ENCODE measurements at regions of chr17 and their contacts with region 1.

Region 1: GRCh38 chr17:48878918-48879898 is 13.4 kb upstream of the ATP5MC1 start:
- DNase-seq: peak; percentile 85 to 94
- ATAC-seq: peak; percentile 86 to 88
- H3K4me3 ChIP-seq: no peak overlapping the region
- H3K27ac ChIP-seq: no peak overlapping the region
- H3K4me1 ChIP-seq: peaks cover 15% of the 10 kb centered on the region
- CTCF ChIP-seq: peak; percentile 99
- EP300 ChIP-seq: no peak
- POLR2A ChIP-seq: no peak
- RAD21 ChIP-seq: peak; percentile 99 to 100

Region 2: DNA sequence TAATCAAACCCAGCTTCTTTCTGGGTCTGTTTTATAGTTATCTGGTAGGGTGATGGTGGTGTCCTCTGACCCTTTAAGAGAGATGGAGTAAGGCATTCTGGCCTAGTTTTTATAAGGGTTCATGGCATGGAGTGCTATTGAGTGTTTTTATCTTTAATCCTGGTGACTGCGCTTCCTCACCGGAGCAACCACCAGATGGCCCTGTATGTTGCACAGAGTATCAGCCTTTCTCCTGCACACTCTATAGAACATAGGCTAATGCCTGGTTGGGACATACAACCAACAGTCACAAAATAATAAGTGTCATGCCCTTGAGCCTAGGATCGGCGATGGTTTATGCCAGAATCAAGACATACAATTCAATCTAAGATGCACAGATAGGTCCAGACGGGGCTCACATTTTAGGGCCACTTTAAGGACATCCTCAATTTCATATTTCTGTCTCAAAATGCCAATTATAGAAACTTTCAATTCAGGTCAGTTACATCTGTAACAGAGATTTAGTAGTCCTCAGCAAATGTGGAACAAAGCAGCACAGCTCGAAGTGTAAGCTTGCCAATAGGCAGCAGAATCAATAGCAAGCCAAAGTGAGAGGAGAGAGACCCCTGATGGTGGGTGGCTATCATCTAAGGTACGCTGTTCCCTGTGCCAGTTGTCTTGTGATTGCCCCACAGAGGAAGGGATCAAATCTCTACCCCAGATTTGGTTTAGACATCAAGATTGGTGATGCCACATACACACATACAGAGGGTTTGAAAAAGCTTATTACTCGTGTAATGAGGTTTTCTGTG is 215.9 kb before region 1 on chr17:
- CTCF ChIA-PET with region 1: interaction called, 77 read pairs
- POLR2A ChIA-PET with region 1: no interaction called
- DNase-seq: no peak
- ATAC-seq: peak; percentile 73 to 83
- H3K4me3 ChIP-seq: no peak overlapping the region
- H3K27ac ChIP-seq: no peak overlapping the region
- H3K4me1 ChIP-seq: no peaks in the 10 kb centered on the region
- CTCF ChIP-seq: no peak
- EP300 ChIP-seq: no peak
- POLR2A ChIP-seq: no peak
- RAD21 ChIP-seq: 0 out of 5 replicates have a peak, but pooled peaks of 1 of the 2 experiments have one; percentile 11

Region 3: DNA sequence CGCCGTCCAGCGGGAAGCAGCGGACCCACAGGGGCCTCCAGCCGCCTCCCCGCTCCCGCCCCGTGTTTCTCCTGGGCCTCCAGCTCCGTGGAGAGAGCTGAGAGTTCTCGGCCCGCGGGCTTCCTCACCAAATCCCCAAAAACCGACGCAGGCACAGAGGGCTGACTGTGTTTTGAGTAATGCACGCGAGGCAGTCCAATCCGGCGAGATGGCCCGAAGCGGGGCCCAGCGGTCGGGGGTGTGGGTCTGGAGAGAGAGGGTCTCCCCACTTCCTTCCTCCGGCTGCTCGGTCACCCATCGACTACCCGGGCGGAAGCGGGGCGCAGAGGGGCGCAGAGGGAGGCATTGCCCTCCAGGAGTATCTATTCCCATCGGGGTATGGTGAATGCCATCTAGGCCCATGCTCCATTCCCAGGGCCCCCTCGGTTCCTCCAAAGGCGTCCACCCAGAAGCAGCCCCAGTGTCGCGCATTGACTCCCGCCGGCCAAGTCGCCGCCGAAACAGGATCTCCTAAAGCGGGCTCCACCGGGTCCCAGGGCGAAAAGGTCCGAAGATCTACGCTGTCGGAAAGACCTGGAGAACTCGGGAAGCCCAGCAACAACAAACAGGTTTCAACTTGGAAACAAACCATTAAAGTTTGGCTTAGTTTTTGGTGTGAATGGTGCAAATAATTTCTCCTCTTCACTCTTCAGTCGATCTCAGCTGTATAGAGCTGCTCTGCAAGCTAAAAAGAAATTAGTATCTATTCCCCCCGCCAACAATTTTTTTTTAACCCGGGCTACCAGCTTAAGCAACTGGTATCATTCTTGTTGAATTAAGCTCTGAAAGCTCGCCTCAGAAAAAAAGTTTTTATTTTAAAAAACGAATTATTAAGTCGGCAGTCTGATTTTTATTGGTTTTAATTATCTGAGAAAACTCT is 131.5 kb before region 1 on chr17:
- CTCF ChIA-PET with region 1: interaction called, 24 read pairs
- POLR2A ChIA-PET with region 1: no interaction called
- DNase-seq: no peak
- ATAC-seq: no peak
- H3K4me3 ChIP-seq: no peak overlapping the region
- H3K27ac ChIP-seq: no peak overlapping the region
- H3K4me1 ChIP-seq: peaks cover 17% of the 10 kb centered on the region; the same call in 2 of the 3 replicates
- CTCF ChIP-seq: no peak
- EP300 ChIP-seq: no peak
- POLR2A ChIP-seq: no peak
- RAD21 ChIP-seq: no peak

Region 4: DNA sequence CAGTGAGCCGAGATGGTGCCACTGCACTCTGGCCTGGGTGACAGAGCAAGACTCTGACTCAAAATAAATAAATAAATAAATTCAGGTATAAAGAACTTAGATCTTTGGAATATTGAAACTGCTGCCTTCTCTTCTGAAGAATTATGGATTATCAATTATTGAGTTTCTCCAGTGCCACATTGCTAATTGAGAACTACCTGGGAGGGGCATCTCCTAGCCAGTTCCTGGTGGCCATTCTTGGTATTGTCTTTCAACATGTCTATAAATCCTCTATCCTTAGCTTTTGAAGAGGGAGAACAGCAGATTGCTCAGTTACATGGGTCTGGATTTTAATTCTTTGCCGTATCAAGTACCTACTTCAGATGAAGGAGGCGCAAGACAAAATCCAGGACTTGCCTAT is 19.2 kb before region 1 on chr17:
- CTCF ChIA-PET with region 1: interaction called, 215 read pairs
- POLR2A ChIA-PET with region 1: no interaction called
- DNase-seq: peak in 1 of 2 experiments; percentile 41
- ATAC-seq: peak; percentile 47 to 71; a peak in 4 of 6 replicates
- H3K4me3 ChIP-seq: no peak overlapping the region
- H3K27ac ChIP-seq: no peak overlapping the region
- H3K4me1 ChIP-seq: no peaks in the 10 kb centered on the region
- CTCF ChIP-seq: no peak
- EP300 ChIP-seq: no peak
- POLR2A ChIP-seq: no peak
- RAD21 ChIP-seq: no peak

Region 5: GRCh38 chr17:48901241-48901640 is 22.0 kb after region 1 on chr17:
- CTCF ChIA-PET with region 1: interaction called, 15 read pairs
- POLR2A ChIA-PET with region 1: no interaction called
- DNase-seq: no peak
- ATAC-seq: peak; percentile 17 to 44; a peak in 4 of 6 replicates
- H3K4me3 ChIP-seq: no peak overlapping the region
- H3K27ac ChIP-seq: no peak overlapping the region
- H3K4me1 ChIP-seq: peaks cover 27% of the 10 kb centered on the region
- CTCF ChIP-seq: no peak
- EP300 ChIP-seq: no peak
- POLR2A ChIP-seq: no peak; the same call in 1 of the 2 replicates
- RAD21 ChIP-seq: no peak